ENCODE measurements at regions of chr1 and their contacts with region 1.

Region 1: DNA sequence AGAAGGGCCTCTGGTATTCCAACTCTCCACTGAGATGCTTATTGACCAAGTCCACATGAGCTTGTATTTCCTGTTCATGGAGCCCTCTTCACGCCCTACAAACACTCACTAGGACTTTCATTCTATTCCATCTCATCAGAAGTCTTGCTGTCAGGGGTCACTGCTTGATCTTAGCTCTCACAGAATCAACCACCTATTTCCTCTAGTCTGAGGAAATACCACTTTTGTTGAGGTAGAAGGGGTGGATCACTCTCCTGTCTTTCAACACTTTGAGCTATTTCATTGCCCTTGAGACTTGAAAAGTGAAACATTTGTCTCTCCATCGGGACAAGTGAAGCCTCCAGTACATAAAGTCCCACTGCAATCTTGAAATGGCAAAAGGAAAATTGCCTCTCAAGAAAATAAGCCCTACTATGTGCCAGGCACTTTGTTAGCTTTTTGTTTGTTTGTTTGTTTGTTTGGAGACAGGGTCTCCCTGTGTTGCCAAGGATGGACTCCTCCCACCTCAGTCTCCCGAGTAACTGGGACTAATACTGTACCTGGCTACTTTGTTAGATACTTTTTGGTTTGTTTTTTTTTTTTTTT is 19.8 kb upstream of the FAM110D start:
- DNase-seq: no peak
- ATAC-seq: no peak
- H3K4me3 ChIP-seq: no peak overlapping the region
- H3K27ac ChIP-seq: no peak overlapping the region
- H3K4me1 ChIP-seq: no peaks in the 10 kb centered on the region
- H3K27me3 ChIP-seq: no peaks in the 10 kb centered on the region
- CTCF ChIP-seq: no peak

Region 2: DNA sequence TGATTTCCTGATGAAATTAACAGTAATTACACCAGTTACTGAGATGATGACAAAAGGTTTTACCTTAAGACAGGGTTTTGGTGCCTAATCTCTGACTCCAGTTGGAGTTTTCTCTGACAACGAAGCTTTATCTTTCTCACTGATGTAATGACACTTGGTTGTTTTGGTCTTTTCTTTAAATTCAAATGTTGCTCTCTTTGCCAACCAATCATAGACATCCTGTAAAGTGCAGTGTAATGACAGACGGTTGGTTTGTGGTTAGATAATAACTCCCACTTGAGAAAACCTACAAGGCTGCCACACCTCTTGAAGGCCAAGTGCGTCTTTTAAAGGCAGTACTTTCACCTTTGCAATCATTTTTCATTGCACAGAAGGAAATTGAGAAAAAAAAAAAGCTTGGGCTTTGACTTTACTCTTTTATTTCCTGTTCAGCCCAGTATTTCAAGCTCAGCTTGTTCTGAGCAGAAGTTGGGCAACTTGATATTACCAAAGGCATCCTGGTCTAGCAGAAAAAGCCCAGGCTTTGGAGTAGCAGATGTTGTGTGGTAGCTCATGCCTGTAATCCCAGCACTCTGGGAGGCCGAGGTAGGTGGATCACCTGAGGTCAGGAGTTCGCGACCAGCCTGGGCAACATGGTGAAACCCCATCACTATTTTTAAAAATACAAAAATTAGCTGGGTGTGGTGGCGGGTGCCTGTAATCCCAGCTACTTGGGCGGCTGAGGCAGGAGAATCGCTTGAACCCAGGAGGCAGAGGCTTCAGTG is 12.6 kb before region 1 on chr1:
- CTCF ChIA-PET with region 1: interaction called, 6 read pairs
- POLR2A ChIA-PET with region 1: interaction called, 12 read pairs
- intact Hi-C with region 1: loop called (anchors 2 kb)
- DNase-seq: peak; percentile 92
- ATAC-seq: peak; percentile 72
- H3K4me3 ChIP-seq: peak overlapping the region; percentile 31
- H3K27ac ChIP-seq: peak overlapping the region; percentile 94
- H3K4me1 ChIP-seq: peaks cover 63% of the 10 kb centered on the region
- H3K27me3 ChIP-seq: no peaks in the 10 kb centered on the region
- CTCF ChIP-seq: no peak